T-cell (primary cell): ENCODE measurements at regions of chr19 and their contacts with region 1.

Region 1: GRCh38 chr19:51372649-51373504 is at the start of gene NKG7:
- DNase-seq: peak; percentile 26 to 83 (median 59)
- ATAC-seq: peak; percentile 61 to 74 (median 68)
- H3K4me3 ChIP-seq: peak within 1 kb of the TSS; percentile 17 to 75
- H3K4me3 Mint-ChIP-seq: peak within 1 kb of the TSS; percentile 61 to 96 (median 96)
- H3K27ac ChIP-seq: peak within 1 kb of the TSS; percentile 87
- H3K27ac Mint-ChIP-seq: peak within 1 kb of the TSS; percentile 89
- H3K4me1 ChIP-seq: peaks cover 18 to 90% of the 10 kb centered on the region in 2 experiments
- H3K4me1 Mint-ChIP-seq: peaks cover 59 to 74% (median 67%) of the 10 kb centered on the region in 3 donors
- H3K27me3 ChIP-seq: no peaks in the 10 kb centered on the region
- H3K27me3 Mint-ChIP-seq: no peaks in the 10 kb centered on the region
- total RNA-seq, gene NKG7: 42.9 to 356 (median 105) TPM

Region 2: DNA sequence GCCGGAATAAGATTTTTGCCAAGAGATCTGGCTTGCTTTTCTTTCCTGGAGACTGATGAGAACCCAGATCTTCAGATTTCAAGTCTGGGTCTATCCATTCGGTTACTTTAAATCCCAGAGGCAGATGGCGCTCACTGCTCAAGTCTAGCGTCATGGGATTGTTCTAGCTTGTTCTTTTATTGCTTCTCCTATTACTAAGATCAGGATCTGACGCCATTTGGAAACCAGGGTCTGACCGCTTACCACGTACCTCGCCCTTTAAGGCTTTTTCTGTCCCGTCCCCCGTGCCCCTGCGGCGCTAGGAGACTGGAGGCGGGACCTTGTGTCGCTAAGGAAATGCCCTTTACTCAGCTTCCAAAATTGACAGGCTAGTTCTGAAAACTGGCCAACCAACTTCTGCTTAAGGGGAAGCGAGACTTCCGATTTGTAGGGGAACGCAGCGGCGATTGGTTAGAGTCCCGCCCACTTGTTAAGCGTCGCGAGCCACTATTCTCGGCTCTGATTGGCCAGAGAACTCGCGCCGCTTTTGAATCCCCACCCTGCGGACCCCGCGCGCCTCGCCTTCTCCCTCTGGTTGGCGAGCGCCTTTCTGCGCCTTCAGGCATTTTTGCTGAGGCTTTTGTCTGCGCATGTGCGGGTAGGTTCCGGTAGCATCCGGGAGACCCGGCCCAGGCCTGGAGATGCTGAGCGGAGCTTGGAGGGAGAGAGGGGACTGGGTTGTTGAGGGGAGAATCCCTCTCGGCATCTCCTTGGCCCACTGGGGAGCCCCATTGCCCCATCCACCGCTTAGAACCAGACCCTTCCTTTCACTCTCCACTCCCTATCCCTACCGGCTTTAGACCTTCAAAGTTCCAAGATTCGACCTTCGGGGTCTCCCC is 21.3 kb after region 1 on chr19:
- CTCF ChIA-PET with region 1: interaction called in 1 of 2 experiments, 10 read pairs
- POLR2A ChIA-PET with region 1: interaction called, 3 to 5 read pairs
- DNase-seq: peak; percentile 61 to 94 (median 82)
- ATAC-seq: peak; percentile 95 to 96 (median 96)
- H3K4me3 ChIP-seq: peak overlapping the region; percentile 66
- H3K4me3 Mint-ChIP-seq: peak overlapping the region; percentile 75 to 84 (median 80)
- H3K27ac ChIP-seq: peak overlapping the region; percentile 82
- H3K27ac Mint-ChIP-seq: peak overlapping the region; percentile 88 to 90
- H3K4me1 ChIP-seq: peaks cover 3 to 39% of the 10 kb centered on the region in 2 experiments
- H3K4me1 Mint-ChIP-seq: peaks cover 22 to 34% (median 25%) of the 10 kb centered on the region in 3 donors
- H3K27me3 ChIP-seq: peaks cover 0 to 5% of the 10 kb centered on the region in 2 experiments
- H3K27me3 Mint-ChIP-seq: no peaks in the 10 kb centered on the region

Region 3: DNA sequence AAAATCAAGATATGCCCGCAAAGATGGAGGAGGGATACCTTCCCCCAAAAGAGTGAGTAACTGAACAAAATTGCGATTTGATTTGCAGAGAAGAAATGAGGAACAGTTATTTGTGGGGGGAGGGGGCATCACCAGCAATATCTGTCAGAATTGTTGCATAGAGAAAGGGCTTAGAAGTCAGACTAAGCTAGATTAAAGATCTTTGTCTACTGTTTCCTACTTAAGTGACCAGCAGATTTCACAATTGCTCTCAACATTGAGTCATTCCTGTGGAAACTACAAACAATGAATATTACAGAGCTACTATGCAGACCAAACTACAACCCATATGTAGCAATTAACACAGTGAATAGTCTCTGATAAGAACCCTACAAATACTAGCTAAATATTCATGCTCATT is 449.4 kb after region 1 on chr19:
- CTCF ChIA-PET with region 1: no interaction called
- POLR2A ChIA-PET with region 1: interaction called in 1 of 2 experiments, 10 read pairs
- DNase-seq: no peak
- ATAC-seq: no peak
- H3K4me3 ChIP-seq: no peak overlapping the region
- H3K4me3 Mint-ChIP-seq: no peak overlapping the region
- H3K27ac ChIP-seq: no peak overlapping the region
- H3K27ac Mint-ChIP-seq: no peak overlapping the region
- H3K4me1 ChIP-seq: no peaks in the 10 kb centered on the region
- H3K4me1 Mint-ChIP-seq: no peaks in the 10 kb centered on the region
- H3K27me3 ChIP-seq: no peaks in the 10 kb centered on the region
- H3K27me3 Mint-ChIP-seq: no peaks in the 10 kb centered on the region